Activated T-helper 1 cell treated with anti-CD3 and anti-CD28 coated beads, Interleukin-12 subunit alpha, Interleukin-12 subunit beta, Interleukin-2, Interleukin-4 antibody, amounts not matched to agents 30 ng/mL and 10 ng/mL and 1 ng/mL, durations not matched to agents 14 hours and 24 hours and 36 hours (primary cell): ENCODE measurements at regions of chr5 and their contacts with region 1.

Region 1: GRCh38 chr5:127785098-127785927 is 82.1 kb downstream of the CCDC192 start:
- DNase-seq: peak; percentile 55
- H3K4me3 Mint-ChIP-seq: peak overlapping the region; percentile 62
- H3K27ac Mint-ChIP-seq: peak overlapping the region; percentile 96
- H3K4me1 Mint-ChIP-seq: peaks cover 45% of the 10 kb centered on the region
- H3K27me3 Mint-ChIP-seq: peaks cover 3% of the 10 kb centered on the region

Region 2: GRCh38 chr5:126422989-126423788 is 1362.1 kb before region 1 on chr5 and contains the start of gene GRAMD2B:
- intact Hi-C with region 1: loop called (anchors 5 kb)
- DNase-seq: peak; percentile 53
- H3K4me3 Mint-ChIP-seq: peak within 1 kb of the TSS; percentile 86
- H3K27ac Mint-ChIP-seq: peak within 1 kb of the TSS; percentile 81
- H3K4me1 Mint-ChIP-seq: peaks cover 40% of the 10 kb centered on the region
- H3K27me3 Mint-ChIP-seq: no peaks in the 10 kb centered on the region
- total RNA-seq, gene GRAMD2B: 8.3 and 9.5 TPM in 2 replicates

Region 3: DNA sequence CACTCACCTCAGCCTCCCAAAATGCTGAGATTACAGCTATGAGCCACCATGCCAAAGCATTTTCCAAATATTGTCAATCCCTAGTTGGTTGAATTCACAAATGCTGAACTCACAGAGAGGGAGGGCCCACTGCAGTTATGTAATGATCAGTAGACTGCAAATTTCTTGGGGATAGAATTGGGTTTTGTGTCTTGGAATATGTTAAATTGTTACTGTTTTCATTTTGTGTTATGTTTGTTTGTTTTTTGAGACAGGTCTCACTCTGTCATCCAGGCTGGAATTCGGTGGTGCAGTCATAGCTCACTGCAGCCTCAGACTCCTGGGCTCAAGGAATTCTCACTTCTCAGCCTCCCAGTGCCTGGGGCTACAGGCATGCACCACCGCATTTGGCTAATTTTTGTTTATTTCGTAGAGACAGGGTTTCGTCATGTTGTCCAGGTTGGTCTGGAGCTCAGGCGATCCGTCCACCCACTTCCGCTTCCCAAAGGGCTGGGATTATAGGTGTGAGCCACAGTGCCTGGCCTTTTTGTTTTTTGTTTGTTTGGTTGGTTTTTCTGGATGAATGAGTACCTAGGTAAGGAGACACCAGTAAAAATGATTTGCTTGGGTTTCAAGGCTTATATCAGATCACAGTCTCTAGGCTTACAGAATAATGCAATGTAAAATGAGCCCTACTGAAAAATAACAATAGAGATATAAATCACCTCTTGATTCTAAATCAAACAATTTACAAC is 1039.9 kb before region 1 on chr5:
- intact Hi-C with region 1: loop called (anchors 1 kb)
- DNase-seq: no peak
- H3K4me3 Mint-ChIP-seq: no peak overlapping the region
- H3K27ac Mint-ChIP-seq: peak overlapping the region; percentile 40
- H3K4me1 Mint-ChIP-seq: peaks cover 60% of the 10 kb centered on the region
- H3K27me3 Mint-ChIP-seq: peaks cover 1% of the 10 kb centered on the region

Region 4: GRCh38 chr5:127757576-127757975 is 27.7 kb before region 1 on chr5:
- intact Hi-C with region 1: loop called (anchors 1 kb)
- DNase-seq: no peak
- H3K4me3 Mint-ChIP-seq: no peak overlapping the region
- H3K27ac Mint-ChIP-seq: no peak overlapping the region
- H3K4me1 Mint-ChIP-seq: no peaks in the 10 kb centered on the region
- H3K27me3 Mint-ChIP-seq: peaks cover 3% of the 10 kb centered on the region

Region 5: DNA sequence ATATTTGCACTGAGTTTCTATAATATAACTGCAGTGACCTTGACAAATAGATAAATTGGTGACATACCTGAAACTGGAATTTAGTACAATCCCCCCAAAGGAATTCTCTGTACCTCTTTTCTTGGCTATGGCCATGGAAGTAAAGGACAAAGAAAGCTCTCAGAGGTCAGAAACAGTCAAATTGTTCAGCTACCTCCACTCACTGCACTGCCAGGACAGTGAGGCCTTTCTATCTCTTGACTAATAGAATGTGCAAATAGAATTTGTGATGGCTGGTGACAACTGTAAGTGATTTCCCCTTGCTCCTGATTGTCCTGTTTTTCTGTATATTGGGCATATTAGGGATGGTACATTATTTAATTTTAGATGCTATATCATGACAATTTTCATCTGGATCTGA is 15.0 kb before region 1 on chr5:
- intact Hi-C with region 1: no loop called
- DNase-seq: no peak
- H3K4me3 Mint-ChIP-seq: no peak overlapping the region
- H3K27ac Mint-ChIP-seq: no peak overlapping the region
- H3K4me1 Mint-ChIP-seq: no peaks in the 10 kb centered on the region
- H3K27me3 Mint-ChIP-seq: peaks cover 13% of the 10 kb centered on the region

Region 6: GRCh38 chr5:127801751-127802476 is 16.6 kb after region 1 on chr5:
- intact Hi-C with region 1: no loop called
- DNase-seq: no peak
- H3K4me3 Mint-ChIP-seq: no peak overlapping the region
- H3K27ac Mint-ChIP-seq: no peak overlapping the region
- H3K4me1 Mint-ChIP-seq: no peaks in the 10 kb centered on the region
- H3K27me3 Mint-ChIP-seq: peaks cover 4% of the 10 kb centered on the region

Region 7: DNA sequence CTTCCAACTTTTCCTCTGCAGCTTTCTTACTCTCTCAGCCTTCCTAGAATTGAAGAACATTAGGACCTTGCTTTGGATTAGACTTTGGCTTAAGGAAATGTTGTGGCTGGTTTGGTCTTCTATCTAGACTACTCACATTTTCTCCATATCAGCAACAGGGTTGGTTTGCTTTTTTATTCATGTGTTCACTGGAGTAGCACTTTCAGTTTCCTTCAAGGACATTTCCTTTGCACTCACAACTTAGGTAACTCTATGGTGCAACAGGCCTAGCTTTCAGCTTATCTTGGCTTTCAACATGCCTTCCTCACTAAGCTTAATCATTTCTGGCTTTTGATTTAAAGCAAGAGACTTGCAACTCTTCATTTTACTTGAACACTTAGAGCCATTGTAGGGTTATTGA is 71.0 kb after region 1 on chr5:
- intact Hi-C with region 1: loop called (anchors 1 kb)
- DNase-seq: no peak
- H3K4me3 Mint-ChIP-seq: no peak overlapping the region
- H3K27ac Mint-ChIP-seq: no peak overlapping the region
- H3K4me1 Mint-ChIP-seq: peaks cover 8% of the 10 kb centered on the region
- H3K27me3 Mint-ChIP-seq: no peaks in the 10 kb centered on the region

Region 8: DNA sequence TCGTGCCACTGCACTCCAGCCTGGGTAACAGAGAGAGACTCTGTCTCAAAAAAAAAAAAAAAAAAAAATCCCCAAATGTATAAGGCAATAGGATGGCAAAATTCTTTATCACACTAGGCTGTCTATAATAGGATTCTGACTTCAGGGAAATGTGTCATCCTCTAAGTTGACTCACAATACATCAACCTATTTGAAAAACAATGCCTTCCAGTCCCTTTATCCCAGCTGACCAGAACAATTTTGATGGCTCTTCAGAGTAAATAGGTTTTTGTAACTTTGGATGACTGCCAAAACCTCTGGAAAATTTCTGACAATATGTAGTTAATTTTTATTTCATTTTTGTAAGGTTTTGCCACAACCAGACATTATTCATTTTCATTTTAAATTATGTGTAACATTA is 102.0 kb after region 1 on chr5:
- intact Hi-C with region 1: no loop called
- DNase-seq: no peak
- H3K4me3 Mint-ChIP-seq: no peak overlapping the region
- H3K27ac Mint-ChIP-seq: no peak overlapping the region
- H3K4me1 Mint-ChIP-seq: no peaks in the 10 kb centered on the region
- H3K27me3 Mint-ChIP-seq: peaks cover 5% of the 10 kb centered on the region

Region 9: DNA sequence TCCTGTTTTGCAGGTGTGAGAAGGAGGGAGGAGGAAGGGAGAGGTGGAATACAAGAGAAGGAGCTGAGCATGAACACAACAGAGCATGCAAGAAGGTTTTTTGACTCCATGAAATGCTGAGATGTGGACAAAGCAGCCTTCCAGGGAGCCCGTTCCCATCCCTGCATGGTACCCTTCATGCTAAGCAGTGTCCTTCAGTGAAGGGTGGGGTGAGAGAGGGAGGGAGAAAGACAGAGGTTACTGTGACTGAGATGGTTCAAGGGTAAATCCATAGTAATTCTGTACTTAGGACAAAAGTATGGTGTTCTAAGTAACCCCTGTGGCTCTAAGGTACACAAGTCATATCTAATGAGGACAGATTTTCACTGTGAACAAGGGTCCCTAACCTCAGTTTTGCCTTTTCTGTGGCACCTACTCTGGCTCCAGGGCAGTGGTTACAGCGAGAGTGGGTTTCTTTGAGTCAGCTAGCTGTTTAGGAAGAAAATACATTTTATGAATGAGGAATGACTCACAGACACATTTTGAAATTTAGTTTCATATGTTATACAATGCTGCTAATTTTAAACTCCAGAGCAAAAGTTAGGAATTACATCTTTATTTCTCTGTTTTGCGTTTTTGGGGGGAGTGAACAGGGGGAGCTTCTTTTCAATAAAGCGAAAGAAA is 113.4 kb after region 1 on chr5:
- intact Hi-C with region 1: loop called (anchors 2 kb)
- DNase-seq: no peak
- H3K4me3 Mint-ChIP-seq: no peak overlapping the region
- H3K27ac Mint-ChIP-seq: no peak overlapping the region
- H3K4me1 Mint-ChIP-seq: peaks cover 5% of the 10 kb centered on the region
- H3K27me3 Mint-ChIP-seq: no peaks in the 10 kb centered on the region

Region 10: DNA sequence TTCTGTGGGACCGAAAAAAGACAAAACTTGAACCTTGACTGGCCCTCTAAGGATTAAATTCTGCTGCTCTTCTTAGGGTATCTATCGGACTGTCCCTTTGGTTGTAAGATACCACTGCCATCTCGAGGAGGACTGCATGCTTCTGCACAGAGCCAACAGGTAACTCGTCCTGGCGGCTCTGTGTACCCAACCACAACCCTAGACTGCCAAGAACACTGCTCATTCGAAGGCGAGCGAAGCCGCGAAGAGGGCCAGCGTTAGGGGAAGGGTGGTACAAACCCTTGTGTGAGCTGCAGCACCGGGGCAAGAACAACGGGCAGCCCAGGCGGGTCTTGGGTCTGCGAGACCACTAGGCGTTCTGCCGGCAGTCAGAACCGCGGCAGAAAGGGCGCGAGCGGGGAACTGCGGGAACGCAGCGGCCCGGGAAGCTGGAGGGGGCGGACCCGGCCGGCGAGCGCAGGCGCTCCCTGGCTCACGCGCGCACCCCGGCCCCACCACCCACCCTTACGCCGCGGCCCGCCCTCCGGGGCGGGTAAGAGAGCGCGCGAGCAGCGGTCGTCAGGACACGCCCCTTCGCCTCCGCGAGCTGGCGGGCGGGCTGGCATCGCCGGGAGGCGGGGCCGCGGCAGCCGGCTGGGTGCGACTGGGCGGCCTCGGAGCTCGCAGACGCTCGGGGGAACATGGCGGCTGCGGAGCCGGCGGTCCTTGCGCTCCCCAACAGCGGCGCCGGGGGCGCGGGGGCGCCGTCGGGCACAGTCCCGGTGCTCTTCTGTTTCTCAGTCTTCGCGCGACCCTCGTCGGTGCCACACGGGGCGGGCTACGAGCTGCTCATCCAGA is 1309.0 kb after region 1 on chr5 and contains the start of gene ISOC1:
- intact Hi-C with region 1: loop called (anchors 10 kb)
- DNase-seq: peak; percentile 91
- H3K4me3 Mint-ChIP-seq: peak within 1 kb of the TSS; percentile 86
- H3K27ac Mint-ChIP-seq: peak within 1 kb of the TSS; percentile 81
- H3K4me1 Mint-ChIP-seq: peaks cover 40% of the 10 kb centered on the region
- H3K27me3 Mint-ChIP-seq: peaks cover 12% of the 10 kb centered on the region
- total RNA-seq, gene ISOC1: 32.4 TPM in 2 replicates